ENCODE measurements at regions of chr19 and their contacts with region 1.

Region 1: DNA sequence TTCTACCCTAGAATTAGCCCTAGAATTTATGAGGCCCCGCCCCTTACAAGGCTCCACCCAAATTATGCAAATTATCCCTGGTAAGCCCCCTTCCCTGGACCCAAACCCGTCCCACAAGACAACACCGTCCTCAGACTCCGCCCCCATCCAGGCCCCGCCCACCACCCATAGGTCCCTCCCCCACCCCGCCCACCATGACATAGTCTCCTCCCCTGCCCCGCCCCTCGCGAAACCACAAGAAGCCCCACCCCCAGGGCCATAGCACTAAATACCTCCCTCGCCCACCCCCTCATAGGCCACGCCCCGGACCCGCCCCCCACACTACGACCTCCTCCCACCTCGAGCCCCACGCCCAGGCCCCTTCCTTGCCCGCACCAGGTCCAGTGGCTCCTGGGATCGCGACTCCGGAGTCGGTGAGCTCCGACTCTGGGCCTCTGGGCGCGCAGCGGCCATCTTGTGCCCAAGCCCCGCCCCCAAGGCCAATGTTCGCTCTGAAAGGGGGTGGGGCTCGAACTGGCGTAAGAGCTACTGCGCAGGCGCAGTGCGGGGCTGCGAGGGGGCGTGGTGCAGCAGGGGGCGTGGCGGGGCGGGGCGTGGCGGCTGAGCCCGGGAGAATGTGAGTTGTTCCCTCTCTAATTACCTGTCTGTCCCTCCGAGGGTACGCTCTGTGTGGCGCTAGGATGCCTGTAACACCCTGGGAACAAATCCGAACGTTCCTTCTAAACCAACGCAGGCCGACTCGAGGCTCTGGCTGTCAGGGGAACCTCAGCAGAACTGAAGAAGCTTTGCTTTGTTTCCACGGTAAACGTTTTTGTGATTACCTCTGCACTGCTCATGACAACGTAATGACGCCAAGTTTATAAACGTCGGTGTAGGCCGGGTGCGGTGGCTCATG is at the start of gene ZNF784:
- DNase-seq: peak; percentile 90 to 94 (median 93)
- H3K4me3 ChIP-seq: peak within 1 kb of the TSS; percentile 57 to 64
- H3K4me3 Mint-ChIP-seq: peak within 1 kb of the TSS; percentile 88 to 96 (median 90)
- H3K27ac ChIP-seq: peak within 1 kb of the TSS; percentile 88
- H3K27ac Mint-ChIP-seq: peak within 1 kb of the TSS; percentile 96 to 99 (median 98)
- H3K4me1 ChIP-seq: peaks cover 38% of the 10 kb centered on the region
- H3K4me1 Mint-ChIP-seq: peaks cover 30 to 57% (median 42%) of the 10 kb centered on the region in 4 donors
- H3K27me3 ChIP-seq: no peaks in the 10 kb centered on the region
- H3K27me3 Mint-ChIP-seq: no peaks in the 10 kb centered on the region
- total RNA-seq, gene ZNF784: 7.4 TPM

Region 2: DNA sequence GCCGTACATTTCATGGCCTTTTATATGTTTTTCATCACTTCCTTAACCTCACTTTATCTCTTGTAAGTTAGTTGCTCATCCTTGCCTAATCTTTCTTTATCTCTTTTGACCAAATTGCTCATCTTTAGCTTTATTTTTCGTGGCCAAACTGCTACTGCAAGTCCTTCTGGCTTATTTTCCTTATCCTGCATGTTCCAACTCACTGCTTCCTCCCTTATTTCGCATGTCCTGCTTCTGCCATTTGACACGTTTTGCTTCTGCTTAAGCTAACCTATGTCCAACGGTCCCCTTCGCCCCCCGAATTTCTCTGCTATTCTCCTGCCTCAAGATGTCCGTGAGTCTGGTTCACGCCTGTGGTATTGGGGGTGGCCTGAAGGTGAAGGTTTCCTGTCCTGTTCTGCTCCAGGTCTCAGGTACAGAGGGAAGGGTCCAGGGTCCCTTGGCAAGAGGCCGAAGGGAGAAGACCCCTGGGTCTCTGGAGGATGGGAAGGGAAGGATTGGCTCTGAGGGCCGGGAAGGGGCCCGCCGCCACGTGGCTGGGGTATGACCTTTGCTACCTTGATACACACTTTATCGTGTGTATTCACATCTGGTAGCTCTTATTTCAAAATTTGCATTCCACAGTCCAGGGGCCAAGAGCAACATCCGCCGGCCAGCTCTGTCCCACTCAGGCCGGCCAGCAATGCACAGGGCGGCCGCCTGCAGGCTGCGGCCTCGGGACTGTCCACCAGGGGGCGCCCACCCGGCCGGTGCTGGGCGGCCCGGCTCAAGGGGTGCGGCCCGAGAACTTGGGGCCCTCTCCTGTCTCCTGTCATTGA is 156.9 kb before region 1 on chr19:
- CTCF ChIA-PET with region 1: interaction called, 23 read pairs
- POLR2A ChIA-PET with region 1: no interaction called
- intact Hi-C with region 1: no loop called
- DNase-seq: peak in 4 of 5 donors; percentile 52 to 61 (median 52)
- H3K4me3 ChIP-seq: no peak overlapping the region
- H3K4me3 Mint-ChIP-seq: peak overlapping the region in 1 of 8 donors; percentile 36
- H3K27ac ChIP-seq: no peak overlapping the region
- H3K27ac Mint-ChIP-seq: peak overlapping the region in 3 of 7 donors; percentile 30 to 38 (median 34)
- H3K4me1 ChIP-seq: peaks cover 2% of the 10 kb centered on the region
- H3K4me1 Mint-ChIP-seq: peaks cover 2 to 7% (median 4%) of the 10 kb centered on the region in 4 donors
- H3K27me3 ChIP-seq: no peaks in the 10 kb centered on the region
- H3K27me3 Mint-ChIP-seq: no peaks in the 10 kb centered on the region

Region 3: DNA sequence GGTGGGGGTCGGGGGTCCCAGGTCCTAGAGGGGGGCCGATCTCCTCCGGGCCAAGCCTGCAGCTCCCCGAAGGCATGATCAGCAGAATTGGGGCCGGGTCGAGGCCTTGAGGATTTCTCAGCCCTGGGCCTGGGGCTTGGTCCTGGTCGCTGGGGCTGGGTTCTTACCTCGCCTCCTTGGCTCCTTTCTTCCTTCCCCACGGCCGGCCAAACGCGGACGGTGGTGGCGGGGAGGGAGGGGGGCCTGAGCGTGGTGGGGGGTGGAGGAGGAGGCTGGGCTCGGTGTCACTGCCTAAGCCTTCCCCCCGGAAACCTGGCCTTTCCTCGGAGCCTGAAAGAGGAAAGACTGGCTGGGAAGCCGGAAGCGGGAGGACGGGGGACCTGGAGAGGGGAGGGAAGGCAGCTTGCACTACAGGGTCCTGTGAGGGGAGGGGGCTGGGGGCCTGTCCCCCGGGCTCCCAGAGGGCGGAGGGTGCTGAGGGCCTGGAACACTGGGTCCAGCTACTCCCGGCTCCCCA is 43.7 kb before region 1 on chr19 and contains the start of gene ZNF579:
- CTCF ChIA-PET with region 1: interaction called, 3 read pairs
- POLR2A ChIA-PET with region 1: interaction called, 9 read pairs
- intact Hi-C with region 1: loop called (anchors 1 kb)
- DNase-seq: peak; percentile 58 to 78 (median 63)
- H3K4me3 ChIP-seq: peak within 1 kb of the TSS; percentile 61 to 68
- H3K4me3 Mint-ChIP-seq: peak within 1 kb of the TSS; percentile 81 to 97 (median 88)
- H3K27ac ChIP-seq: peak within 1 kb of the TSS; percentile 69
- H3K27ac Mint-ChIP-seq: peak within 1 kb of the TSS; percentile 86 to 95 (median 93)
- H3K4me1 ChIP-seq: peaks cover 21% of the 10 kb centered on the region
- H3K4me1 Mint-ChIP-seq: peaks cover 22 to 38% (median 25%) of the 10 kb centered on the region in 4 donors
- H3K27me3 ChIP-seq: no peaks in the 10 kb centered on the region
- H3K27me3 Mint-ChIP-seq: peaks cover 0 to 1% of the 10 kb centered on the region in 2 donors
- total RNA-seq, gene ZNF579: 8.0 to 9.6 TPM

Region 4: GRCh38 chr19:55599468-55600279 is 24.7 kb before region 1 on chr19 and contains the start of gene FIZ1:
- CTCF ChIA-PET with region 1: interaction called, 24 read pairs
- POLR2A ChIA-PET with region 1: interaction called, 95 read pairs
- intact Hi-C with region 1: loop called (anchors 1 kb)
- DNase-seq: peak; percentile 96 to 98 (median 97)
- H3K4me3 ChIP-seq: peak within 1 kb of the TSS; percentile 93 to 99
- H3K4me3 Mint-ChIP-seq: peak within 1 kb of the TSS; percentile 98 to 100 (median 98)
- H3K27ac ChIP-seq: peak within 1 kb of the TSS; percentile 89
- H3K27ac Mint-ChIP-seq: peak within 1 kb of the TSS; percentile 96 to 100 (median 99)
- H3K4me1 ChIP-seq: peaks cover 28% of the 10 kb centered on the region
- H3K4me1 Mint-ChIP-seq: peaks cover 22 to 38% (median 25%) of the 10 kb centered on the region in 4 donors
- H3K27me3 ChIP-seq: no peaks in the 10 kb centered on the region
- H3K27me3 Mint-ChIP-seq: no peaks in the 10 kb centered on the region
- total RNA-seq, gene FIZ1: 20.8 to 26.4 TPM

Region 5: DNA sequence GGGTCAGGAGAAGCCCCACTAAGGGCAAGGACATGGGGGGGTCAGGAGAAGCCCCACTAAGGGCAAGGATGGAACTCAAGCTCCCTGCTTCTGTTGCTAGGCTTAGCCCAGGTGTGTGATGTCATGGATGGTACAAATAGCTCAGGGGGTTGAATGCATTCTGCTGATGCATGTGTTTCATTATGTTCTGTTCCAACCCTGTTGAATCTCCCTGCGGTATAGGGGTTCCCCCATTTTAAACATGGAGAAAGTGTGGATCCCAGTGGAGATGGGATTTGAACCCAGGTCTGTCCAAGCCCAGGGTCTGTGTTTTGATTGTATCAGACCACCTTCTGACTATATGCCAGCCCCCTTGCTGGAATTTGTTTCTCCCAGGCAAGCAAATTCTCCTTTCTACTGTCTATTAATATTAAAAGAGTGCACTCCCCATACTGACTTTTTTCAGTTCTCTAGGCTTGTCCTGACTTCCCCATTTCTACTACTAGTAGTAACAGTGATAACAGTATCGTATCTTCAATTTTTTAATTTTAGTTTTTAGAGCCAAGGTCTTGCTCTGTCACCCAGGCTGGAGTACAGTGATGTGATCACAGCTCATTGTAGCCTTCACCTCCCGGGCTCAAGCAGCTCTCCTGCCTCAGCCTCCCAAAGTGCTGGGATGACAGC is 12.2 kb before region 1 on chr19:
- CTCF ChIA-PET with region 1: interaction called, 94 read pairs
- POLR2A ChIA-PET with region 1: interaction called, 67 read pairs
- intact Hi-C with region 1: no loop called
- DNase-seq: no peak
- H3K4me3 ChIP-seq: no peak overlapping the region
- H3K4me3 Mint-ChIP-seq: no peak overlapping the region
- H3K27ac ChIP-seq: no peak overlapping the region
- H3K27ac Mint-ChIP-seq: peak overlapping the region in 4 of 7 donors; percentile 13 to 62 (median 24)
- H3K4me1 ChIP-seq: peaks cover 3% of the 10 kb centered on the region
- H3K4me1 Mint-ChIP-seq: peaks cover 19 to 47% (median 29%) of the 10 kb centered on the region in 4 donors
- H3K27me3 ChIP-seq: no peaks in the 10 kb centered on the region
- H3K27me3 Mint-ChIP-seq: no peaks in the 10 kb centered on the region